ENCODE measurements at regions of chr20 and their contacts with region 1.

Region 1: DNA sequence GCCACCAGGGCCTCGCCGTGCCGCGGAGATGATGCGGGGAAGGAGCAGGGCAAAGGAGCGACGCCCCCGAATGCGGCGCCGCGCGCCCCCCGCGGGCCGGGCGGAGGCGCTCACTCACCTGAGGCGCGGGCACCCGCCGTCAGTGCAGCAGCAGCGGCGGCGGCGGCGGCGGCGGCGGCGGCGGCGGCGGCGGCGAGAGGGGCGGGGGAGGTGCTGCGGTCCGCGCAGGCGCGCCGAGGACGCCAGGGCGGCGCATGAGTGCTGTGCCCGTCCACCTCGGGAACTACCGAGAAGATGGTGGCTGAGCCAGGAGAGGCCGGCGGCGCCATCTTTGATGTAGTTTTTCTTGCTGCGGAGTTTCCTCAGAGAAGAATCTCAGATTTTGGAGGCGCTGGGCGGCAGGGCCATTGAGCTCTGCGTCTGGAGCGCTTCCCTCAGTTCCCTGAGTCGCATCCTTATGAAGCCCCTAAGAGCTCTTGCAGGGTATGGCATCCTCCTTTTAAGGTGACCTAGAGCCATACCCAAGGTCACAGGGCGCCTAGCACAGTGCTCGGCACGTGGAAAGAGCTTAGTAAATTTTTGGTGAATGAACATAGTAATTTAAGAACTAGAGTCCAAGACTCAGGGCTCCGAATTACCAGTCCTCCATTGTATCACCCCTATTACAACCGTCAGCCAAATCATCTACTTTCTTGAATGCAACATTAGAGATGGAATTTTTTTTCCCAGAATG is at the start of gene NDRG3:
- DNase-seq: peak; percentile 93 to 95
- ATAC-seq: peak; percentile 90 to 99 (median 95)
- H3K4me3 ChIP-seq: peak within 1 kb of the TSS; percentile 54 to 96 (median 84)
- H3K27ac ChIP-seq: peak within 1 kb of the TSS; percentile 73 to 94 (median 88)
- H3K4me1 ChIP-seq: peaks cover 5 to 54% (median 22%) of the 10 kb centered on the region in 9 donors
- H3K27me3 ChIP-seq: no peaks in the 10 kb centered on the region
- CTCF ChIP-seq: peak in 4 of 9 donors; percentile 3 to 17 (median 9)
- total RNA-seq, gene NDRG3: 20.7 to 37.0 (median 30.7) TPM

Region 2: DNA sequence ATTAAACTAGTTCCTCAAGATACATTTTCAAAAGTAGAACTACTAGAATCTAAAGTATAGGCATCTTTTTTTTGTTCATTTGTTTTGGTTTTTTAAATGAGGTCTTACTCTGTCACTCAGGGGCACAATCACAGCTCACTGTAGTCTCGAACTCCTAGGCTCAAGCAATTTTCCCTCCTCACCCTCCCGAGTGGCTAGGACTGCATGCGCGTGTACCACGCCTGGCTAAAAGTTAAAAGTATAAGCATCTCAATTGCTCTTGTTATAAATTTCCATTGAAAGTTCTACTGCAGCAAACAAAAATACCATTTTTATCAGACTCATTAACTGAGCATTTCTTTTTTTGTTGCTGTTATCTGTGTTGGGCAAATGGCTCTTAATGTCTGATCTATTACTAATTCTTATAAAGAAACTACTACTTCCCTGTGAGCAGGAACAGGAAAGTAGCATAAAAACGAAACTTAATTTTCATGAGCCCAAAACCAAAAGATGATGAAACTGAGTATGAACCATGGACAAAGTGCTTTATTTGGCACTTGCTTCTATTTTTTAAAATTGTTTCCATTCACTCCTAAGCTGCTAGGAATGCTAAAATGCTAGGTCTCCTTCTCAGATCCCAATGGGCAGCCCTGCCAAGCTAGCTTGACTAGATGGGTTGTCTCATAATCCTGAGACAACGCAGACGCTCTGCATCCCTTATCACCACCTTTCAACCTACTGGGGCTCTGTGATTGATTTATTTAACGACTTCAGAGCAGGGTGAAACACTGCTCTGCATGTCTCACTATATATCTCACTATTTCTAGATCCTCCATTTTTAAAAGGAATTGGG is 1690.4 kb before region 1 on chr20:
- intact Hi-C with region 1: no loop called
- DNase-seq: no peak
- ATAC-seq: peak in 6 of 8 donors; percentile 40 to 79 (median 66)
- H3K4me3 ChIP-seq: no peak overlapping the region
- H3K27ac ChIP-seq: peak overlapping the region in 3 of 10 donors; percentile 8 to 64 (median 20)
- H3K4me1 ChIP-seq: peaks cover 0 to 32% (median 21%) of the 10 kb centered on the region in 9 donors
- H3K27me3 ChIP-seq: no peaks in the 10 kb centered on the region
- CTCF ChIP-seq: no peak

Region 3: GRCh38 chr20:36355469-36356171 is 390.5 kb before region 1 on chr20:
- intact Hi-C with region 1: no loop called
- DNase-seq: no peak
- ATAC-seq: no peak
- H3K4me3 ChIP-seq: no peak overlapping the region
- H3K27ac ChIP-seq: no peak overlapping the region
- H3K4me1 ChIP-seq: no peaks in the 10 kb centered on the region
- H3K27me3 ChIP-seq: peaks cover 0 to 39% (median 23%) of the 10 kb centered on the region in 7 donors
- CTCF ChIP-seq: no peak

Region 4: GRCh38 chr20:36411861-36412454 is 334.1 kb before region 1 on chr20:
- intact Hi-C with region 1: no loop called
- DNase-seq: no peak
- ATAC-seq: no peak
- H3K4me3 ChIP-seq: no peak overlapping the region
- H3K27ac ChIP-seq: no peak overlapping the region
- H3K4me1 ChIP-seq: no peaks in the 10 kb centered on the region
- H3K27me3 ChIP-seq: peaks cover 0 to 16% (median 6%) of the 10 kb centered on the region in 7 donors
- CTCF ChIP-seq: no peak

Region 5: DNA sequence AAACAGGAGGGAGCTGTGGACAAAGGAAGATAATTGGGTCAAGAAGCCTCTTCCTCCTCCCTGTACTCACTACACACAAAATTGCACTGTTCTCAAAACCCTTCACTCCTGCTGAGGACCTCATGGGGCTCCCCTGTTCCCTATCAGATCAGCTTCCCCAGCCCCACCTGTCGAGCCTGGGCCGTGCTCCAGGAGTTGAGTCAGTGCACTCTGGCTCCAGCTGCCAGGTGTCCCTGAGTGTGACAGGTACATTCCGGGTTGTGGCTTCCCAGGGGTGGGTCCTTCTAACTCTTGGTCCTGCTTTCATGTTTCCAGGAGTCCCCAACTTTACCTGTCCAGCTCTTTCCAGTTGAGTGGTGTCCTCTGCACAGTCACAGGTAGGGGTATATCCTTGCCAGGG is 132.1 kb before region 1 on chr20:
- intact Hi-C with region 1: loop called in 5 of 10 experiments (anchors 5 to 10 kb)
- DNase-seq: no peak
- ATAC-seq: no peak
- H3K4me3 ChIP-seq: no peak overlapping the region
- H3K27ac ChIP-seq: no peak overlapping the region
- H3K4me1 ChIP-seq: peaks cover 0 to 7% (median 0%) of the 10 kb centered on the region in 9 donors
- H3K27me3 ChIP-seq: no peaks in the 10 kb centered on the region
- CTCF ChIP-seq: no peak

Region 6: GRCh38 chr20:37392421-37393178 is 646.5 kb after region 1 on chr20:
- intact Hi-C with region 1: no loop called
- DNase-seq: no peak
- ATAC-seq: no peak
- H3K4me3 ChIP-seq: no peak overlapping the region
- H3K27ac ChIP-seq: no peak overlapping the region
- H3K4me1 ChIP-seq: peaks cover 0 to 14% (median 0%) of the 10 kb centered on the region in 9 donors
- H3K27me3 ChIP-seq: no peaks in the 10 kb centered on the region
- CTCF ChIP-seq: peak in 5 of 9 donors; percentile 6 to 33 (median 10)